SK-N-SH (cell line): ENCODE measurements at regions of chr4 and their contacts with region 1.

Region 1: DNA sequence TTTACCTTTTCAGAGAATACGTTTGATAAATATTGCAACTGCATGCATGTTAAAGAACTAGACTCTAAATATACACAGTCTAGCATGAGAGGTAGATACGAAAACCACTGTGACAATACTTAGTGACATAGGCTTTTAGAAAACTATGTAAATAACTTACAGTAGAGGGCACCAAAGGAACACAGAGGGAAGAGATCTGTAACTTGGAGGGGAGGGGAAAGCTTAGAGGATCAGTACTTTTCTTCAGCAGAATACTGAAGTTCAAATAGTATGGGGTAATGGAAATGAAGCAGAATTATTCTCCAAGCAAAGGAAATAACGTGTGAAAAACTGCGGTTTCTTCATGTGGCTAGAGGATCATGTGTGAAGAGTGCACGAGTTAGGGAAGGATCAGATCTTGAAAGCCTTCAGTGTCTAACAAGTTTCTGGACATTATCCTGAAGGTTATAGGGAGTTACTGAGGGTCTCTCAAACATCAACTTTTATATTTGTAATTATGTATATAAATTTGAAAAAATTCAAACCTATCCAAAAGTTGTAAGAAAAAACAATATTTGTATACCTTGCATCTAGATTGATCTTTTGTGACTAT is 264.3 kb downstream of the NPFFR2 start:
- DNase-seq: peak; percentile 48
- H3K4me3 ChIP-seq: no peak overlapping the region
- H3K27ac ChIP-seq: no peak overlapping the region
- H3K4me1 ChIP-seq: no peaks in the 10 kb centered on the region; a peak in 2 of 4 replicates
- H3K27me3 ChIP-seq: no peaks in the 10 kb centered on the region
- CTCF ChIP-seq: peak; percentile 84
- EP300 ChIP-seq: no peak
- RAD21 ChIP-seq: peak; percentile 92

Region 2: GRCh38 chr4:72274251-72274650 is 21.8 kb before region 1 on chr4:
- CTCF ChIA-PET with region 1: interaction called, 10 read pairs
- POLR2A ChIA-PET with region 1: no interaction called
- DNase-seq: no peak
- H3K4me3 ChIP-seq: no peak overlapping the region
- H3K27ac ChIP-seq: no peak overlapping the region
- H3K4me1 ChIP-seq: no peaks in the 10 kb centered on the region
- H3K27me3 ChIP-seq: no peaks in the 10 kb centered on the region
- CTCF ChIP-seq: no peak
- EP300 ChIP-seq: no peak
- RAD21 ChIP-seq: no peak

Region 3: GRCh38 chr4:73021634-73022033 is 725.6 kb after region 1 on chr4:
- CTCF ChIA-PET with region 1: interaction called, 11 read pairs
- POLR2A ChIA-PET with region 1: no interaction called
- DNase-seq: peak; percentile 46
- H3K4me3 ChIP-seq: no peak overlapping the region; a peak in 1 of 4 replicates
- H3K27ac ChIP-seq: no peak overlapping the region
- H3K4me1 ChIP-seq: no peaks in the 10 kb centered on the region
- H3K27me3 ChIP-seq: peaks cover 20% of the 10 kb centered on the region
- CTCF ChIP-seq: peak; percentile 75
- EP300 ChIP-seq: no peak
- RAD21 ChIP-seq: peak; percentile 72